Tibial artery (tissue), 4 donors: ENCODE measurements at regions of chr2 and their contacts with region 1.

Region 1: DNA sequence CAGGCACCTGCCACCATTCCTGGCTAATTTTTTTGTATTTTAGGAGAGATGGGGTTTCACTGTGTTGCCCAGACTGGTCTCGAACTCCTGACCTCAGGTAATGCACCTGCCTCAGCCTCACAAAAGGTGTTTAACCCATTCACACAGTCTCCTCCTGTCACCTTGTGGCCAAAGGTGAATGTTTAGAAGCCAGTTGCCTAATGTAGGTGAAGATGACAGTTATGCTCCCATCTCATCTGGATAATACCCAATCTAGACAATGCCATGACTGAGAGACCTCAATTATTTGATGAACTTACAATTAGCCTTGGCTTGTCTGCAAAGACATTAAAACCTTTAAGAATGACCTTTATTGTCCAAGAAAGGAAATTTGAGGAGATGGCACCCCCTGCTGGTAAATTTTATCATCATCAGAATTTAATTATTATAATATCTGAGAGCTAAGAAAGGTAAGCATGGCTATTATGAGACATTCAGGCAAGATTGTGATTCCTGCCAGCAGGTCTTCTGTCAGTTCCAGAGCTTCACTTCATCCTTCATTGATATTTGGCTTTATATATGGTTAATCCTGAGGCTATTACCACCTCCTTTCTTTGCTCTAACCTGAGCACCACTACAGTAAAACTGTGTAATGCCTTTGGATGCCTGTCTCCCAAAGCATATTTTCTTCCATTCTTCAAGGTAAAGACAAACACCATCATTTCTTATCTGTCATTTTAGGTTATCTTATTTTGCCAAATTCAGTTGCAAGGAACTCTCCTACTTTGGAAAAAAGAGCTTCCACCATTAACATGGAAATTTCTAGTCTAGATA is 117.6 kb downstream of the FAM124B start:
- DNase-seq: no peak
- H3K4me3 ChIP-seq: no peak overlapping the region
- H3K27ac ChIP-seq: no peak overlapping the region
- H3K4me1 ChIP-seq: no peaks in the 10 kb centered on the region
- H3K27me3 ChIP-seq: no peaks in the 10 kb centered on the region
- CTCF ChIP-seq: peak; percentile 53 to 76

Region 2: GRCh38 chr2:223995569-223995968 is 288.8 kb before region 1 on chr2:
- intact Hi-C with region 1: loop called (anchors 5 kb)
- DNase-seq: no peak
- H3K4me3 ChIP-seq: no peak overlapping the region
- H3K27ac ChIP-seq: no peak overlapping the region
- H3K4me1 ChIP-seq: peaks cover 0 to 12% (median 3%) of the 10 kb centered on the region in 4 donors
- H3K27me3 ChIP-seq: no peaks in the 10 kb centered on the region
- CTCF ChIP-seq: no peak

Region 3: GRCh38 chr2:224601923-224602322 is 317.6 kb after region 1 on chr2:
- intact Hi-C with region 1: no loop called
- DNase-seq: no peak
- H3K4me3 ChIP-seq: no peak overlapping the region
- H3K27ac ChIP-seq: no peak overlapping the region
- H3K4me1 ChIP-seq: no peaks in the 10 kb centered on the region
- H3K27me3 ChIP-seq: no peaks in the 10 kb centered on the region
- CTCF ChIP-seq: no peak